WTC11 (cell line): ENCODE measurements at regions of chr5 and their contacts with region 1.

Region 1: DNA sequence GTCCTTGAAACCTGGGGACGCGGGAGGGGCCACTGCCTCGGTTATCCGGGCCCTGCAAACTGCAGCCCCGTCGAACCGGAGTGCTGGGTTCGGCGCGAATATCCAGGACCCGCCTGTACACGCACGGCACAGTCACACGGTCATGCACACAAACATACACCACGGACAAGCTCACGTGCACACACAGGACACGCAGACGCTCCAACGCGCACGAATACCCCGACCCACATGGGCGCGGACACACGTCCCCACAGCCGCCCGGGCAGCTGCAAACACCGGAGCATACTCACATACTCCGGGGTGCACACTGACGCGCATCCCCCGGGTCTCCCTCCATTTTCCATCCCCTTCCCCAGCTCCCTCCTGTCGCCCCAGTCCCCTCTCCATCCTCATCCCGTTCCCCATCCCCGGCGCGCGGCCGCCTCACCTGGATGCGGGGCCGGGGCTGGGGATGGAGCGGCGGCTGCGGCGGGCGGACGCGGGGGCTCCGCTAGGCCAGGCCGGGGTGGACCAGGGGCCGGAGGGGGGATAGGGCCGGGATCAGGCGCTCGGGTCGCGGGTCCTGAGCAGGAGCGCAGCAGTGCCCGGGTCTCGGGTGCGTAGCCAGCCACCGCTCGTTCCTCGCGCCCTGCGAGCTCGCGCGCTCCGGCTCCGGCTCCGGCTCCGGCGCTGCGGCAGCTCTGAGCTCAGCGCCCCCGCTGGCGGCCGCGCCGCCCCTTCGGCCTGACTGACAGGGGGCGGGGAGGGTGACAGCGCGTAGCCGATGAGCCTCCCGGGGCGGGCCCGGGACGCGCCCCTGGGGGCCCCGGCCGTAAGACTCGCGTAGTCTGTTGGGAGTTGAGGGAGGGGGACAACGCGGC is at the starts of genes EIF4E1B and SNCB:
- DNase-seq: peak; percentile 72
- ATAC-seq: peak; percentile 63
- H3K4me3 Mint-ChIP-seq: peak within 1 kb of the TSS; percentile 76
- H3K27ac Mint-ChIP-seq: no peak within 1 kb of the TSS
- H3K4me1 Mint-ChIP-seq: peaks cover 39% of the 10 kb centered on the region
- H3K27me3 Mint-ChIP-seq: peaks cover 54% of the 10 kb centered on the region
- CTCF ChIP-seq: no peak
- total RNA-seq, gene EIF4E1B: 0.74 to 1.3 TPM (median 1.1 TPM) in 3 replicates
- total RNA-seq, gene SNCB: 6.8 to 13.4 TPM (median 9.6 TPM) in 3 replicates

Region 2: DNA sequence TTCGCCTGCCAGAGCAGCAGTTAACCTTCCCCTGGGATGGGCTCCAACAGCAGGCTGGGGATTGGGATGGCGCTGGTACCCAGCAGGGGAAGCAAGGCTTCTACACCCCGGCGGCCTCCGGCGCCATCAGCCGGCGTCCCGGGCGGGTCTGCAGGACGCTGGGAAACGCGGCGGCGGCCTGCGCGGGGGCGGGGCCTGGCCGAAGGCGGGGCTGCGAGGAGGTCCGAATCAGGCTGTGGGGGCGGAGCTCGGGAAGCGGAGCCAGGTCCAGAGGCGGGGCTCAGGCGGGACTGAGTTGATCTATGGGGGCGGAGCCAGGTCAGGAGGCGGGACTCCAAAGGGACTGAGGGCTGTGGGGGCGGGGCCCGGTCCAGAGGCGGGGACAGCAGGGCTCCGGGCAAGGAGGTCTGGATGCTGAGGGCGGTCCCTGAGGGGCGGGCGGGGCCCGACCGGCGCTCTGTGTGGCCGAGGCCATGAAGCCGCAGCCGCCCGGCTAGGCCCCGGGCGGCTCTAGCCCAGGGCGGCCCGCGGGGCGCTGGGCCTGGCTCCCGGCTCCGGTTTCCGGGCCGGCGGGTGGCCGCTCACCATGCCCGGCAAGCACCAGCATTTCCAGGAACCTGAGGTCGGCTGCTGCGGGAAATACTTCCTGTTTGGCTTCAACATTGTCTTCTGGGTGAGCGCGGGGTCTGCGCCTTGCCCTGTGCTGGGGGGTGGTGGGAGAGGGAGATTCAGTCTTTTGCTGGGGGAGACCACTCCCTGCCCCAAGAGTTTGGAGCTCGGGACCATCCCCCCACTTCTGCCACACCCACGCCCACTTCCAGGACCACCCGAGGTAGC is 17.2 kb after region 1 on chr5 and contains the start of gene TSPAN17:
- CTCF ChIA-PET with region 1: interaction called, 12 read pairs
- POLR2A ChIA-PET with region 1: interaction called, 3 read pairs
- DNase-seq: peak; percentile 100
- ATAC-seq: peak; percentile 93
- H3K4me3 Mint-ChIP-seq: peak within 1 kb of the TSS; percentile 81
- H3K27ac Mint-ChIP-seq: peak within 1 kb of the TSS; percentile 90
- H3K4me1 Mint-ChIP-seq: peaks cover 45% of the 10 kb centered on the region
- H3K27me3 Mint-ChIP-seq: no peaks in the 10 kb centered on the region
- CTCF ChIP-seq: no peak
- total RNA-seq, gene TSPAN17: 45.7 to 47.8 TPM (median 46.1 TPM) in 3 replicates

Region 3: GRCh38 chr5:177071666-177072385 is 441.7 kb after region 1 on chr5:
- CTCF ChIA-PET with region 1: no interaction called
- POLR2A ChIA-PET with region 1: no interaction called
- DNase-seq: peak; percentile 76
- ATAC-seq: peak; percentile 91
- H3K4me3 Mint-ChIP-seq: peak overlapping the region; percentile 8
- H3K27ac Mint-ChIP-seq: peak overlapping the region; percentile 22
- H3K4me1 Mint-ChIP-seq: peaks cover 3% of the 10 kb centered on the region
- H3K27me3 Mint-ChIP-seq: no peaks in the 10 kb centered on the region; the same call in 1 of the 2 replicates
- CTCF ChIP-seq: peak; percentile 88